B cell (primary cell): ENCODE measurements at regions of chr11 and their contacts with region 1.

Region 1: GRCh38 chr11:72080256-72080974 is at the starts of genes LRRC51 and NUMA1:
- DNase-seq: peak; percentile 100
- ATAC-seq: peak; percentile 90
- H3K4me3 ChIP-seq: peak within 1 kb of the TSS; percentile 61 to 84 (median 77)
- H3K4me3 Mint-ChIP-seq: peak within 1 kb of the TSS; percentile 87
- H3K27ac ChIP-seq: peak within 1 kb of the TSS; percentile 78 to 90
- H3K27ac Mint-ChIP-seq: peak within 1 kb of the TSS; percentile 87
- H3K4me1 ChIP-seq: peaks cover 15 to 23% of the 10 kb centered on the region in 2 donors
- H3K4me1 Mint-ChIP-seq: peaks cover 41% of the 10 kb centered on the region
- H3K27me3 ChIP-seq: no peaks in the 10 kb centered on the region
- H3K27me3 Mint-ChIP-seq: no peaks in the 10 kb centered on the region
- CTCF ChIP-seq: no peak
- total RNA-seq, gene LRRC51: 5.5 and 7.7 TPM in 2 replicates
- total RNA-seq, gene NUMA1: 297 and 300 TPM in 2 replicates

Region 2: DNA sequence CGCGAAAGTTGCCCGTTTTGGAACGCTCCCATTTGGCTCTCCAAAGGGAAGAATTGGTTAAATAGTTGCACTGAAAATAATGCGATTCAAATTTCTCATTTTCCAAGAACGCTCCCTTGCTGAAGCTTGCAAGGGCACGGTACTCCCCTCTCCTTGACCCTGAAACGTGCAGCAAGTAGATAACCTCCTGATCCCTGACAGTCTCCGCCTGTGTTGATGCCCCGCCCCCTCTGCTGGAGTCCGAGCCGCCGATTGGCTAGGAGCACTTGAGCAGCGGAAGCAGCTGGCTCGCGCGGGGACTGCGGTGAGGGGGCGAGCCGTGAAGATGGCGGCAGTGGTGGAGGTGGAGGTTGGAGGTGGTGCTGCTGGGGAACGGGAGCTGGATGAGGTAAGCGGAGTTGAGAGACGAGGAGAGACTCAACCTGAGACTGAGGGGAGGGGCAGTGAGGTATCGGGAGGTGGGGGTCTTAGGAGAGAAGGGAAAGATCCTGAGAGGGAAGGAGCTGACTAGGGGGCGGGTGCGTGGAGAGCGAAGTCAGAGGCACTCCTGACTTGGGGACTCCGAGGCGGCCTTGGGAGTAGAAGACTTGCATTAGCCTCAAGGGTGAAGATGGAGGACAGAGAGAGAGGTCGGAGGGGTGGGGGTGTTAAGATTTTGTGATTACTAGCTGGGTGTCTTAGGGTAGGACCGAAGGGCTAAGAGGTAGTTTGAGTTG is 151.5 kb before region 1 on chr11 and contains the start of gene RNF121:
- CTCF ChIA-PET with region 1: no interaction called
- POLR2A ChIA-PET with region 1: interaction called, 3 read pairs
- intact Hi-C with region 1: loop called (anchors 1 kb)
- DNase-seq: peak; percentile 97
- ATAC-seq: peak; percentile 91
- H3K4me3 ChIP-seq: peak within 1 kb of the TSS; percentile 89 to 100 (median 99)
- H3K4me3 Mint-ChIP-seq: peak within 1 kb of the TSS; percentile 96
- H3K27ac ChIP-seq: peak within 1 kb of the TSS; percentile 92 to 93
- H3K27ac Mint-ChIP-seq: peak within 1 kb of the TSS; percentile 98
- H3K4me1 ChIP-seq: peaks cover 35 to 46% of the 10 kb centered on the region in 2 donors
- H3K4me1 Mint-ChIP-seq: peaks cover 59% of the 10 kb centered on the region
- H3K27me3 ChIP-seq: no peaks in the 10 kb centered on the region
- H3K27me3 Mint-ChIP-seq: no peaks in the 10 kb centered on the region
- CTCF ChIP-seq: no peak
- total RNA-seq, gene RNF121: 54.5 and 56.0 TPM in 2 replicates

Region 3: DNA sequence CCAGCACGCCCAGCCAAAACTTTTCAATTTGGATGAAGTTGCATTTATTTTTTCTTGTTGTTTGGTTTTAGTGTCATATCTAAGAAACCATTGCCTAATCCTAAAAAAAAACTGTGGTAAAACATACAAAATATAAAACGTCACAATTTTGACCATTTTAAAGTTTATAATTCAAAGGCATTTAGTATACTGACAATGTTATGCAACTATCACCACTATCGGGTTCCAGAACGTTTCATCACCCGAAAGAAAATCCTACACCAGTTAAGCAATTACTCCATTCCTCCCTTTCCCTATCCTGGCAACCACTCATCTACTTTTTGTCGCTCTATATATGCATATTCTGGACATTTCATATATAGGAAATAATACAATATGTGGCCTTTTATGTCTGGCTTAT is 194.0 kb after region 1 on chr11:
- CTCF ChIA-PET with region 1: no interaction called
- POLR2A ChIA-PET with region 1: no interaction called
- intact Hi-C with region 1: no loop called
- DNase-seq: no peak
- ATAC-seq: no peak
- H3K4me3 ChIP-seq: no peak overlapping the region
- H3K4me3 Mint-ChIP-seq: no peak overlapping the region
- H3K27ac ChIP-seq: no peak overlapping the region
- H3K27ac Mint-ChIP-seq: no peak overlapping the region
- H3K4me1 ChIP-seq: no peaks in the 10 kb centered on the region
- H3K4me1 Mint-ChIP-seq: peaks cover 2% of the 10 kb centered on the region
- H3K27me3 ChIP-seq: no peaks in the 10 kb centered on the region
- H3K27me3 Mint-ChIP-seq: peaks cover 19% of the 10 kb centered on the region
- CTCF ChIP-seq: no peak